Transverse colon (tissue), 4 donors: ENCODE measurements at regions of chr1 and their contacts with region 1.

Region 1: GRCh38 chr1:54671985-54672608 is 30.5 kb downstream of the MROH7 start:
- DNase-seq: peak; percentile 71
- H3K4me3 ChIP-seq: no peak overlapping the region
- H3K27ac ChIP-seq: no peak overlapping the region
- H3K4me1 ChIP-seq: no peaks in the 10 kb centered on the region
- H3K27me3 ChIP-seq: no peaks in the 10 kb centered on the region
- CTCF ChIP-seq: peak; percentile 70 to 95 (median 91)
- EP300 ChIP-seq: no peak
- POLR2A ChIP-seq: no peak

Region 2: GRCh38 chr1:54800899-54801759 is 129.0 kb after region 1 on chr1 and contains the start of gene TTC22:
- in situ Hi-C with region 1: loop called in 1 of 4 experiments (anchors 10 kb)
- intact Hi-C with region 1: no loop called
- DNase-seq: peak; percentile 88
- H3K4me3 ChIP-seq: peak within 1 kb of the TSS; percentile 41 to 59 (median 50)
- H3K27ac ChIP-seq: peak within 1 kb of the TSS; percentile 79 to 90 (median 88)
- H3K4me1 ChIP-seq: peaks cover 0 to 65% (median 57%) of the 10 kb centered on the region in 4 donors
- H3K27me3 ChIP-seq: no peaks in the 10 kb centered on the region
- CTCF ChIP-seq: peak; percentile 42 to 91 (median 66)
- EP300 ChIP-seq: no peak
- POLR2A ChIP-seq: peak; percentile 83
- total RNA-seq, gene TTC22: 39.8 to 174 (median 98.4) TPM

Region 3: GRCh38 chr1:54810100-54810942 is 138.2 kb after region 1 on chr1:
- in situ Hi-C with region 1: loop called in 2 of 4 experiments (anchors 10 kb)
- intact Hi-C with region 1: loop called (anchors 5 kb)
- DNase-seq: peak; percentile 81
- H3K4me3 ChIP-seq: no peak overlapping the region
- H3K27ac ChIP-seq: no peak overlapping the region
- H3K4me1 ChIP-seq: peaks cover 0 to 34% (median 14%) of the 10 kb centered on the region in 4 donors
- H3K27me3 ChIP-seq: no peaks in the 10 kb centered on the region
- CTCF ChIP-seq: peak; percentile 74 to 88 (median 80)
- EP300 ChIP-seq: no peak
- POLR2A ChIP-seq: no peak